Activated CD4-positive, alpha-beta T cell treated with anti-CD3 and anti-CD28 coated beads, Interleukin-2, amount 10 ng/mL, durations not matched to agents 24 days and 14 days (primary cell): ENCODE measurements at regions of chr7 and their contacts with region 1.

Region 1: DNA sequence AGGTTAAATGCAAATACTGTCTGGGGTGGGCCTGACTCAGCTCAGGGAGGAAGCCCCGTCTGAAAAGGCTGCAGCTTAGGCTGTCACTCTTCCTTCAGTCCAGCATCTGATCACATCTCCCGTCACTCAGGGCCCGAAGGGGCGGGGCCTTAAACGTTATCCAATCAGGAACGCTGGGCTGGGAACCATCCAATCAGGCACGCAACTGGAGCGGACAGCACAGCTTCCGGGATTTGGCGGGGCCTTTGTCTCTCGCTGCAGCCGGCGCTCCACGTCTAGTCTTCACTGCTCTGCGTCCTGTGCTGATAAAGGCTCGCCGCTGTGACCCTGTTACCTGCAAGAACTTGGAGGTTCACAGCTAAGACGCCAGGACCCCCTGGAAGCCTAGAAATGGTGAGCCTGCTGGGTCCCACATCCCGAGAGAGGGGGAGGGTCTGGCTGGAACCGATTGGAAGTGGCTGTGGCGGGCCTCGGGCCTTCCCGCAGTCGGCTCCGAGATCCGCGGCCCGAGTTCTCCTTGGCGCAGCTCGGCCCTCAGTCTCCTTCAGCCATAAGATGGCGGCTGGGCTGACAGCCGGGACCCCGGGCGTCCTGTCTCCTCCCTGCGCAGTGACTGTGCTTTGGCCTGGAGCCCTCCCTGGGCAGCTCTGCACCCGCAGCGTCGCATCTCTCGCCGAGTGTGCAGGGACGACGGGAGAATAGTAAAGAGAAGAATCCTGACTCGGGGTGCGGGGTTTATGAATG is at the start of gene ZNF92:
- DNase-seq: peak; percentile 99
- H3K4me3 Mint-ChIP-seq: peak within 1 kb of the TSS; percentile 99
- H3K27ac Mint-ChIP-seq: peak within 1 kb of the TSS; percentile 96
- H3K4me1 Mint-ChIP-seq: peaks cover 24% of the 10 kb centered on the region
- H3K27me3 Mint-ChIP-seq: no peaks in the 10 kb centered on the region
- total RNA-seq, gene ZNF92: 12.9 and 15.0 TPM in 2 replicates

Region 2: DNA sequence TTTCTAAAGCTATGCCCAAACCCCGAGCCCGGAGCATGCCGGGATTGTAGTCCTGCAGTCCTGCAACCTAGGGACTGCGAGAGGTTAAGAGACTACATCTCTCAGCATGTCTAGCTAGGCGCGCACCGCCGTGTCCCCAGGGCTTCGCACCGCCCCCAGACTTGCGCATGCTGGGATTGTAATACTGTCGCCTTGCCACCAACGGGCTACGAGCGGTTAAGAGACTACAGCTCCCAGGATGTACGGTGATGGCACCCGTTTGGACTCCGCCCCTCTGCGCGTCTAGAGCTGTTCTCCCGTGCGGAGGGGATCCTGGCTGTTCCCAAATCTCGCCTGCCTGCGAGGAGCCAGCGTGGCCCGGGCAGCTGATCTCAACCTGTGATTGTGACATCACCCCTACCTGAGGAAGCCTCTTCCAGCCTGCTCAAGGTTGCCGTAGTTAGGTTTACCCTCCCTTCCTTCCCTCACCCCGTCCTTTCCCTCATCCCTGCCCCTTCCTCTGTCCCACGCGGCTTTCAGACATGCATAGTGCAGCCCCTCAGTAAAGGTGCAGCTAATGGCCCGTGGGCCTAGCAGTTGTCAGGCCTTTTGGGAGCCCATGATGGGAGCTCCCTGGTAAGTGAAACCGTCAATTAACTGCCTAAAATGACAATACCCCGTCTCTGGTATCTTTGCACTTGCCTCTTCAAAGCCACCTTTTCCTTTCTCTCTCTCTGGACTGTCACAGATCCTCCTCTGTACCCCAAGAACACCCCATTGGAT is 1066.3 kb before region 1 on chr7:
- intact Hi-C with region 1: loop called (anchors 10 kb)
- DNase-seq: peak; percentile 97
- H3K4me3 Mint-ChIP-seq: peak overlapping the region; percentile 97
- H3K27ac Mint-ChIP-seq: peak overlapping the region; percentile 93
- H3K4me1 Mint-ChIP-seq: peaks cover 14% of the 10 kb centered on the region
- H3K27me3 Mint-ChIP-seq: no peaks in the 10 kb centered on the region

Region 3: GRCh38 chr7:64794171-64794844 is 579.5 kb before region 1 on chr7 and contains the start of gene ZNF138:
- intact Hi-C with region 1: loop called (anchors 5 kb)
- DNase-seq: peak; percentile 97
- H3K4me3 Mint-ChIP-seq: peak within 1 kb of the TSS; percentile 100
- H3K27ac Mint-ChIP-seq: peak within 1 kb of the TSS; percentile 97
- H3K4me1 Mint-ChIP-seq: peaks cover 13% of the 10 kb centered on the region
- H3K27me3 Mint-ChIP-seq: no peaks in the 10 kb centered on the region
- total RNA-seq, gene ZNF138: 8.6 and 9.2 TPM in 2 replicates

Region 4: DNA sequence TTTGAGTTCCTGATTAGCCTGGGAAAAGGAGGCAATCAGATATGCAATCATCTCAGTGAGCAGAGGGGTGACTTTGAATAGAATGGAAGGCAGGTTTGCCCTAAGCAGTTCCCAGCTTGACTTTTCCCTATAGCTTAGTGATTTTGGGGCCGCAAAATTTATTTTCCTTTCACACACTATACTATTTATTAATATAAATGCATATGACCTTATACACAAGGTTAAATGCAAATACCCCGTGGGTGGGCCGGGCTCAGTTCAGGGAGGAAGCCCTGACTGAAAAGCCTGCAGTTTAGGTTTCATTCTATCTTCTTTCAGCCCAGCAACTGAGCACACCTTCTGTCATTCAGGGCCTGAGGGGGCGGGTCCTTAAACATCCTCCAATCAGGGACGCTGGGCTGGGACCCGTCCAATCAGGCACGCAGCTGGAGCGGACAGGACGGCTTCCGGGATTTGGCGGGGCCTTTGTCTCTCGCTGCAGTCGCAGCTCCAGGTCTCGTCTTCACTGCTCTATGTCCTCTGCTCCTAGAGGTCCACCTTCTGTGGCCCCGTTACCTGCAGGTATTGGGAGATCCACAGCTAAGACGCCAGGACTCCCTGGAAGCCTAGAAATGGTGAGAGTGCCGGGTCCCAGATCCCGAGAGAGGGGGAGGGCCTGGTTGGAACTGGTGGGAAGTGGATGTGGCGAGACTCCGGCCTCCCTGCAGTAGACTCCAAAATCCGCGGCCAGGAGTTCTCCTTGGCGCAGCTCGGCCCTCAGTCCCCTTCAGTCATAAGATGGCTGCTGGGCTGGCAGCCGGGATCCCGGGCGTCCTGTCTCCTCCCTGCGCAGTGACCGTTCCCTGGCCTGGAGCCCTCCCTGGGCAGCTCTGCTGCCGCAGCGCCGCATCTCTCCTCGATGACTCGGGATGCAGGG is 470.7 kb before region 1 on chr7 and contains the start of gene ZNF273:
- intact Hi-C with region 1: loop called (anchors 2 kb)
- DNase-seq: peak; percentile 97
- H3K4me3 Mint-ChIP-seq: peak within 1 kb of the TSS; percentile 98
- H3K27ac Mint-ChIP-seq: peak within 1 kb of the TSS; percentile 97
- H3K4me1 Mint-ChIP-seq: peaks cover 24% of the 10 kb centered on the region
- H3K27me3 Mint-ChIP-seq: no peaks in the 10 kb centered on the region
- total RNA-seq, gene ZNF273: 8.7 and 9.4 TPM in 2 replicates

Region 5: GRCh38 chr7:65006094-65006992 is 367.4 kb before region 1 on chr7 and contains the start of gene ERV3-1:
- intact Hi-C with region 1: loop called (anchors 10 kb)
- DNase-seq: peak; percentile 97
- H3K4me3 Mint-ChIP-seq: peak within 1 kb of the TSS; percentile 98
- H3K27ac Mint-ChIP-seq: peak within 1 kb of the TSS; percentile 95
- H3K4me1 Mint-ChIP-seq: peaks cover 26% of the 10 kb centered on the region
- H3K27me3 Mint-ChIP-seq: no peaks in the 10 kb centered on the region
- total RNA-seq, gene ERV3-1: 7.4 and 9.5 TPM in 2 replicates

Region 6: GRCh38 chr7:65037740-65038678 is 335.8 kb before region 1 on chr7:
- intact Hi-C with region 1: loop called (anchors 5 kb)
- DNase-seq: peak; percentile 96
- H3K4me3 Mint-ChIP-seq: peak overlapping the region; percentile 82
- H3K27ac Mint-ChIP-seq: peak overlapping the region; percentile 86
- H3K4me1 Mint-ChIP-seq: peaks cover 11% of the 10 kb centered on the region
- H3K27me3 Mint-ChIP-seq: no peaks in the 10 kb centered on the region

Region 7: DNA sequence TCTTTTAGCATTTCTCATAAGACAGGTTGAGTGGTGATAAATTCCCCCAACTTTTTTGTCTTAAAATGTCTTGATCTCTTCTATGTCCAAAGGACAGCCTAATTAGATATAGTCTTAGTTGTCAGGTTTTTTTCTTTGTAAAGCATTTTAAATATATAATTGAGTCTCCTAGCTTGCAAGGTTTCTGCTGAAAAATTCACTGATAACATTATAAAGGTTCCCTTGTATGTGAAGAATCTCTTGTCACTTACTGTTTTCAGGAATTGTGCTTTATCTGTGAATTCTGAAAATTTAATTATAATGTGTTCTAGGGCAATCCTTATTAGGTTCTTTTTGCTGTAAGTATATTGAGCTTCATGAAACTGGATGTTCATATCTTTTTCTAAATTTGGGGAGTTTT is 97.0 kb before region 1 on chr7:
- intact Hi-C with region 1: no loop called
- DNase-seq: no peak
- H3K4me3 Mint-ChIP-seq: no peak overlapping the region
- H3K27ac Mint-ChIP-seq: no peak overlapping the region
- H3K4me1 Mint-ChIP-seq: no peaks in the 10 kb centered on the region
- H3K27me3 Mint-ChIP-seq: peaks cover under 1% of the 10 kb centered on the region

Region 8: DNA sequence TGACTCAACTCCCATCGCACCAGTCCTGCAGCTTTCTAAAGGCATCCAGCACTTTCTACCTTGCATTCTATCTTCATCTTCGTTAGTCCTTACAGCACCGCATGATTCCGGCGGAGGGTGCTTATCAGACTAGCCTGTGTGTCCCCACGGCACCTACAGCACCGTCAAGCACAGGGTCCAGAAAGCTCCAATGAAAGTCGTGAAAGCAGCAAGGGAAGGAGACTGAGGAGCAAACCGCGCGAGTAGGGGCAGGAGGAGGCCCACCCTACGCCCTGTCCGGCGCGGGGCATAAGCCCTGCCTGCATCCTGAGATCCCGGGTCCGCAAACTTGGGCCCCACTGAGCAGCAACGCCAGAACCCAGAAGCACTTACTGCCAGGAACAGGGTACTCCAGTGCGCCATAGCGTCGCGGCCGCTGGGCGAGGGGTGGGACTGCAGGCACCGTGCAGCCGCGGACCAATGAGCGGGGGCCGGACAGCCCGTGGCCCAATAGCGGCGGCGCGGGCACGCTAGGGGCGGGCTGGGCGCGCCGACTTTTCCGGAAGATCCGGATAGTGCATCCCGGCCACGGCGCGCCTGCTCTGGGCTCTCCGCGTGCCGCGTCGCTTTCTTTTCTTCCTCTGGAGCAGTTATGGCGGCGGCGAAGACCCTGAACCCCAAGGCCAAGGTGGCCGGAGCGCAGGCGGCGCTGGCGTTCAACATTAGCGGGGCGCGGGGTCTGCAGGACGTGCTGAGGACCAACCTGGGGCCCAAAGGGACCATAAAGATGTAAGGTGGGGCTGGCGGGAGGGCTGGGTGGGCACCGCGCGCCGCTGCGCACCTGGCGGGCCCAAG is 376.9 kb after region 1 on chr7:
- intact Hi-C with region 1: loop called (anchors 10 kb)
- DNase-seq: peak; percentile 98
- H3K4me3 Mint-ChIP-seq: peak overlapping the region; percentile 87
- H3K27ac Mint-ChIP-seq: peak overlapping the region; percentile 87
- H3K4me1 Mint-ChIP-seq: peaks cover 6% of the 10 kb centered on the region
- H3K27me3 Mint-ChIP-seq: no peaks in the 10 kb centered on the region